ENCODE measurements at regions of chr12 and their contacts with region 1.

Region 1: GRCh38 chr12:3947781-3948180 is 74.6 kb upstream of the PARP11 start:
- DNase-seq: peak in 2 of 3 donors; percentile 21 to 29
- H3K4me3 ChIP-seq: peak overlapping the region in 1 of 3 experiments; percentile 42
- H3K4me3 Mint-ChIP-seq: peak overlapping the region in 1 of 2 donors; percentile 66
- H3K27ac ChIP-seq: peak overlapping the region in 1 of 2 donors; percentile 75
- H3K27ac Mint-ChIP-seq: peak overlapping the region; percentile 70 to 88 (median 77)
- H3K4me1 ChIP-seq: peaks cover 16 to 21% of the 10 kb centered on the region in 2 donors
- H3K4me1 Mint-ChIP-seq: peaks cover 24% of the 10 kb centered on the region
- H3K27me3 ChIP-seq: no peaks in the 10 kb centered on the region
- H3K27me3 Mint-ChIP-seq: peaks cover 0 to 3% (median 1%) of the 10 kb centered on the region in 3 donors
- CTCF ChIP-seq: no peak

Region 2: GRCh38 chr12:3896801-3897331 is 50.9 kb before region 1 on chr12:
- intact Hi-C with region 1: loop called in 1 of 2 experiments (anchors 10 kb)
- DNase-seq: peak; percentile 82 to 84 (median 83)
- H3K4me3 ChIP-seq: peak overlapping the region in 1 of 3 experiments; percentile 68
- H3K4me3 Mint-ChIP-seq: peak overlapping the region; percentile 55 to 87
- H3K27ac ChIP-seq: peak overlapping the region; percentile 89 to 91
- H3K27ac Mint-ChIP-seq: peak overlapping the region; percentile 92 to 99 (median 99)
- H3K4me1 ChIP-seq: peaks cover 59 to 70% of the 10 kb centered on the region in 2 donors
- H3K4me1 Mint-ChIP-seq: peaks cover 6% of the 10 kb centered on the region
- H3K27me3 ChIP-seq: no peaks in the 10 kb centered on the region
- H3K27me3 Mint-ChIP-seq: no peaks in the 10 kb centered on the region
- CTCF ChIP-seq: no peak